ENCODE measurements at regions of chr16 and their contacts with region 1.

Region 1: DNA sequence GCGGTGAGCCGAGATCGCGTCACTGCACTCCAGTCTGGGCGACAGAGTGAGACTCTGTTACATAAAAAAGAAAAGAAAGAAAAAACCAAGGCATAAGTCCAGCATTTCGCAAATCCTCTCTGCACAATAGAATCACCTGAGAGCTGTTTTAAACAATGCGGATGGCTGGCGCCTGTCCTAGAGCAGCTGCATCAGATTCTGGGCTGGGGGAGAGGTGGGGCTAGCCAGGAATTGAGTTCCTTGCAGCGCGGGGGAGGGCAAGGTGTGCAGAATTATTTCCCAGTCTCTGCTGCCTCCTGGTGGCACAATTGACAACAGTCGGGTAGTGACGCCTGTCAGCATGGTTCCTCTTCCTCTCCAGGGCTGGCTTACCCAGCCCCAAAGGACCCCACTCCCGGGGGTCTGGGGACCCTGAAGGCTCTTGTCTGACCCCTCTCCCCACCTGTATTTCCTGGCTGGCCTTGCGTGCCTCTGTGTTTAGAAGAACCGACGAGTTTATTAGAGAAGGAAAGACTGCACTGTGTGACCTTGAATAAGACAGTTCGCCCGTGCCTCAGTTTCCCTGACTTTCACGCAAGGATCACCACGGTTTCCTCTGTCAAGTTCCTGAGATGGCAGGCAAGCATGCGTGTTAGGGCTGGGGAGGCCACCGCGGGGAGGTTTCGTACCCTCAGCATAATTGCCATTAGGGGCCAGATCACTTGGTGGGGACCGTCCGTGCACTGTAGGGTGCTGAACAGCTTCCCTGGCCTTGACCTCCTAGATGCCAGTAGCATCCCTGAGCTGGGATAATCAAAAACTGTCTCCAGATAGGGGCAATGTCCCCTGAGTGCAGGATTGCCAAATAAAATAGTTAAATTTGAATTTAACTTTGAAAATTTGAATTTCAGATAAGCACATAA is 41.0 kb upstream of the PLCG2 start:
- DNase-seq: peak; percentile 92
- H3K4me3 ChIP-seq: peak overlapping the region in 1 of 4 donors; percentile 37
- H3K27ac ChIP-seq: peak overlapping the region in 2 of 4 donors; percentile 12 to 28
- H3K4me1 ChIP-seq: peaks cover 0 to 12% (median 9%) of the 10 kb centered on the region in 4 donors
- H3K27me3 ChIP-seq: no peaks in the 10 kb centered on the region
- CTCF ChIP-seq: peak; percentile 83 to 94 (median 85)
- EP300 ChIP-seq: no peak
- POLR2A ChIP-seq: no peak

Region 2: GRCh38 chr16:80540516-80541272 is 1197.4 kb before region 1 on chr16 and contains the start of gene DYNLRB2:
- in situ Hi-C with region 1: loop called in 1 of 4 experiments (anchors 25 kb)
- intact Hi-C with region 1: no loop called
- DNase-seq: peak; percentile 95
- H3K4me3 ChIP-seq: peak within 1 kb of the TSS; percentile 52 to 63 (median 52)
- H3K27ac ChIP-seq: peak within 1 kb of the TSS; percentile 66 to 79 (median 70)
- H3K4me1 ChIP-seq: peaks cover 0 to 19% (median 3%) of the 10 kb centered on the region in 4 donors
- H3K27me3 ChIP-seq: peaks cover 28% of the 10 kb centered on the region
- CTCF ChIP-seq: no peak
- EP300 ChIP-seq: no peak
- POLR2A ChIP-seq: peak; percentile 49
- total RNA-seq, gene DYNLRB2: not detected

Region 3: DNA sequence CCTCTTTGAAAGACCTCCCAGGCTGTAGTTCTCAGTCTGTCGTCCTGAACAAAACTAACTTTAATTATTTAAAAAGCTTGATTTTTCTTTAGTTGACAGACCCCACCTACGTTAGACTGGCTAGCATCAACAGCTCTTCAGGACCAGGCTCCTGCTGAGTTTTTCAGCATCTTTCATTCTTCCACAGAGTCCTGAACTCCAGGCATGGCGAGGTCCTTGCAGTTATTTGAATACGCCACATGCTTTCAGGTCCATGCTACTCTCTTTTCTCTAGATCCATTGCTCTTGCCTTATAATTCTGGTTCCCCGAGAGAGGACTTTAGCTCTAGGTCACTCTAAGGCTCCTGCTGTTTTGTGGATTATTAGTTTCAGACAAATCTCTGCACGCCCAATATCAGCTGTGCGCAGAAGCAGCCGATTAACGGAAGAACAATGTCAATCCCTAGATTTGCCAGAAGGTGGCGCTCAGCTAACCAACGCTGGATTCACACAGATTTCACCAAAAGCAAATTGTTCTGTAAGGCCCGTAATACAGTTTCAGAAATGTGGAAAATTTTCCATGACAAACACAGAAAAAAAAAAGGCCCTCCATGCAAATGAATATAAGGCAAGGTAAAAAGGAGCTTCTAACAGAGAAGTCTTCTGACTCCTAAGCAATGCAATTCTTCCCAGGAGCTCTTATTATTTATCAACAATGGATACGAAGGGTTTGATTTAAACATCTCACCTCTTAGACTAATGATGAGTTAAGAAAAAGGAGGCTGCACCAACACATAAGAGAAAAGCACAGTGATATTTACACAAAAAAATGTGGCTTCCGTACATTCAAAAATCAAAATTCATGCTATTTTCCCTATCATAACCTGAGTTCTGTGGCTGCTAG is 533.1 kb before region 1 on chr16:
- in situ Hi-C with region 1: loop called in 3 of 4 experiments (anchors 10 to 25 kb)
- intact Hi-C with region 1: loop called (anchors 10 kb)
- DNase-seq: peak; percentile 36
- H3K4me3 ChIP-seq: no peak overlapping the region
- H3K27ac ChIP-seq: no peak overlapping the region
- H3K4me1 ChIP-seq: peaks cover 0 to 4% (median 1%) of the 10 kb centered on the region in 4 donors
- H3K27me3 ChIP-seq: no peaks in the 10 kb centered on the region
- CTCF ChIP-seq: peak; percentile 46 to 78 (median 74)
- EP300 ChIP-seq: no peak
- POLR2A ChIP-seq: no peak

Region 4: GRCh38 chr16:81366316-81366932 is 371.7 kb before region 1 on chr16:
- in situ Hi-C with region 1: loop called in 1 of 4 experiments (anchors 25 kb)
- intact Hi-C with region 1: loop called (anchors 10 kb)
- DNase-seq: no peak
- H3K4me3 ChIP-seq: no peak overlapping the region
- H3K27ac ChIP-seq: no peak overlapping the region
- H3K4me1 ChIP-seq: no peaks in the 10 kb centered on the region
- H3K27me3 ChIP-seq: no peaks in the 10 kb centered on the region
- CTCF ChIP-seq: peak; percentile 55 to 78 (median 66)
- EP300 ChIP-seq: no peak
- POLR2A ChIP-seq: no peak